ENCODE measurements at regions of chr1 and their contacts with region 1.

Region 1: DNA sequence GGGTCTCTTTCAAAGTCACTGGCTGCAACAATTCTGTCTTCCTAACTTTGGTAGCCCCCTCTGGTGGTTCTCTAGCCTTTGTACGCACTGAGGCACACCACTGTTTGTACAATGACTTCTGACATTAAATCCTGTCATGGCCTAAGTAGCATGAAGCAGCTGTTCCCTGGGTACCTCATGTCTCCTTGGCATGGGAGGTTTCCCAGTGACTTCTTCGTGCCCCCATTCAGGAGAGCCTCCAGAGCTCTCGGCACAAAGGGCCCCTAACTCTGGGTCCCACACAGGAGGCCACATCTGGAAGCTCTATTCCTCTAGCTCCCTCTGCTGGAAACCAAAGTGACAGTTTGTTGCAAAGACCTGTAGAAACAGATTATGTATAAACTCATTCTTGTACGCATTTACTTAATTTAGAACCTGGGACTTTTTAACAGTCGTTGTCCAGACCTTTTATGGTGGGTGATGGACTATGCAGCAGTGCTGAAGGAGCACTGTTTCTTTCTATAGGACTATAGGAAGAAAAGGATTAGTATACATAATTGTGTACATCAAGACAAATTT is 13.4 kb downstream of the SWT1 start:
- DNase-seq: peak; percentile 84
- H3K4me3 Mint-ChIP-seq: no peak overlapping the region
- H3K27ac Mint-ChIP-seq: no peak overlapping the region
- H3K4me1 Mint-ChIP-seq: no peaks in the 10 kb centered on the region
- H3K27me3 Mint-ChIP-seq: no peaks in the 10 kb centered on the region
- CTCF ChIP-seq: peak; percentile 80

Region 2: GRCh38 chr1:184951788-184952187 is 218.6 kb before region 1 on chr1:
- CTCF ChIA-PET with region 1: no interaction called
- POLR2A ChIA-PET with region 1: no interaction called
- intact Hi-C with region 1: no loop called
- DNase-seq: no peak
- H3K4me3 Mint-ChIP-seq: no peak overlapping the region
- H3K27ac Mint-ChIP-seq: no peak overlapping the region
- H3K4me1 Mint-ChIP-seq: peaks cover 10% of the 10 kb centered on the region
- H3K27me3 Mint-ChIP-seq: peaks cover 16% of the 10 kb centered on the region
- CTCF ChIP-seq: no peak

Region 3: DNA sequence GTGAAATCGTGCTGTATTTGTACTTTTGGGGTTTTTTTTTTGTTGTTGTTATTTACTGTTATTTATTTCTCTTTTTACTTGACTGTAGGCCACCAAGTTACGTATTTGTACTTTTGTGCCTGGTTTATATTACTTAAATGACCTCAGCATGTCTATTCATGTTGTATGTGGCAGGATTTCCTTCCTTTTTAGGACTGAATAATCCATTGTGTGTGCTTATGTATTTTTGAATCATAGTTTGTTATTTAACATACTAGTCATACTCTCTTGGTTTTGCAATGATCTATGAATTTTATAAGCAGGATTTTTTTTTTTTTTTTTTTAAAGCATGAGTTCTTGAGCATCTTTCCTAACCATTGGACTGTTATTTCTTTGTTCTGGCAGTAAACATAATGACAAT is 73.8 kb before region 1 on chr1:
- CTCF ChIA-PET with region 1: no interaction called
- POLR2A ChIA-PET with region 1: no interaction called
- intact Hi-C with region 1: no loop called
- DNase-seq: peak; percentile 24
- H3K4me3 Mint-ChIP-seq: no peak overlapping the region
- H3K27ac Mint-ChIP-seq: peak overlapping the region; percentile 57
- H3K4me1 Mint-ChIP-seq: peaks cover 11% of the 10 kb centered on the region
- H3K27me3 Mint-ChIP-seq: no peaks in the 10 kb centered on the region
- CTCF ChIP-seq: no peak

Region 4: GRCh38 chr1:185110145-185110544 is 60.2 kb before region 1 on chr1:
- CTCF ChIA-PET with region 1: interaction called, 10 read pairs
- POLR2A ChIA-PET with region 1: no interaction called
- intact Hi-C with region 1: no loop called
- DNase-seq: no peak
- H3K4me3 Mint-ChIP-seq: no peak overlapping the region
- H3K27ac Mint-ChIP-seq: no peak overlapping the region
- H3K4me1 Mint-ChIP-seq: peaks cover 6% of the 10 kb centered on the region
- H3K27me3 Mint-ChIP-seq: no peaks in the 10 kb centered on the region
- CTCF ChIP-seq: no peak

Region 5: GRCh38 chr1:185193756-185194155 is 23.4 kb after region 1 on chr1:
- CTCF ChIA-PET with region 1: interaction called, 17 read pairs
- POLR2A ChIA-PET with region 1: no interaction called
- intact Hi-C with region 1: no loop called
- DNase-seq: no peak
- H3K4me3 Mint-ChIP-seq: no peak overlapping the region
- H3K27ac Mint-ChIP-seq: no peak overlapping the region
- H3K4me1 Mint-ChIP-seq: no peaks in the 10 kb centered on the region
- H3K27me3 Mint-ChIP-seq: no peaks in the 10 kb centered on the region
- CTCF ChIP-seq: no peak

Measured in MCF 10A (cell line).